ENCODE measurements at regions of chr19 and their contacts with region 1.

Region 1: DNA sequence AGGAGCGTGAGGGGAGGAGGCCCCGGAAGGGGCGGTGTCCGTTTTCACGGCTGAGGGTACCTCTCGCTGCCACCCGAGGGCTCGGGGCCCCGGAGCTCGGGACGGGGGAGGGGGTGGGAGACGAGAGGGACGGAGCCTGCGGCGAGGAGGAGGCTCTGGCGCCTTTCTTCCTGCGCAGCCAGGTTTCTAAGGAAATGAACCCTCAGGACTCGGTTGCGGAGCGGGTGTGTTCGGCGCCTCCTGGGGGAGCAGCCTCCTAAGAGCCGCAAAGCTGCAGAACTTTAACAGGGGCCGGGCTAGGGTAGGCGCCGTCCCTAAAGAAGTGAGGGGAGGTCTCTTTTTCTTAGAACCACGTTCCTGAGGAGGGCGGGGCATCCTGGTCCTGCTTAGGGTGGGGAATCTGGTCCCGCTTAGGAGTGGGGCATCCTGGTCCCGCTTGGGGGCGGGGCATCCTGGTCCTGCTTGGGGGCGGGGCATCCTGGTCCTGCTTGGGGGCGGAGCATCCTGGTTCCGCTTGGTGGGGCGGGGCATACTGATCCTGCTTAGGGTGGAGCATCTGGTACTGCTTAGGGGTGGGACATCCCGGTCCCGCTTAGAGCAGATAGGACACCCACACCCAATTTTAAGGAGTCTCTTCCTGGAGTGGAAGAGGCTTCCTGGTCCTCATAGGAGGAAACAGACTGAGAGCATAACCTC is 6.2 kb downstream of the SYT5 start:
- DNase-seq: no peak
- H3K4me3 ChIP-seq: peak overlapping the region; percentile 39
- CTCF ChIP-seq: no peak

Region 2: GRCh38 chr19:55117636-55118391 is 56.0 kb before region 1 on chr19 and contains the start of gene PPP1R12C:
- in situ Hi-C with region 1: loop called (anchors 5 kb)
- DNase-seq: peak; percentile 97
- H3K4me3 ChIP-seq: peak within 1 kb of the TSS; percentile 77
- CTCF ChIP-seq: no peak

Region 3: DNA sequence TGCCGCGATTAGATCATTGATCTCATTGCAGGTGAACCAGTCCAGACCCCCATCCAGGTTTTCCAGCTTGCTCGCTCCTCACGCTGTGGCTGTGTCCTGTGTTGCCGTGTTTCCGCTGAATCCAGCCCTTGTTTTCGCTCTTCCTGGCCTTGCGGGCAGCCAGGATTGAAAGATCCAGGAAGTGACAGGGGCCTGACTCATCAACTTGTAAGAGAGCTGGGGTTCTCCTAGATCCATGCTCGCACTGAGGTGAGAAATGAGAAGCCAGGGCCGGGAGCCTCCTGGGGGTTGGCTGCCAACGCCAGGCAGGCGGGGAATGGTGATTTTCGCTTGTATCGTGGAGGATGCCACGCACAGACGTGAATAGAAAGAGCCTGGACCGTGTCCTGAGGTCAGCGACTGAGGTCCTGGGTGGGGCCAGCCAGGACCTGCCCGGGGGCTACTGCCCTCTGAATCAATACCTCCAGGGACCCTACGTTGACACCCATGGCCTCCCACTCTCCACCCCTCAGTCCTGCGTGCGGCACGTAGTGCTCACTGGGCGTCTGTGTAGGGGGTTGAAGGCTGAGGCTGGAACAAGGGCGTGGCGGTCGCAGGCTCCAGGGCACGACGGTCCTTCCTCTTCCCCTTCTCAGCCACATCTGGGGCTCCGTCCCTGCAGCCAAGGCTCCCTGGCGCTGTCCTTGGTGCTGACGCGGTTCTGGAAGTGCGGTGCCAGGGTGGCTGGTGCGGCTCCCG is 42.8 kb after region 1 on chr19:
- in situ Hi-C with region 1: loop called (anchors 5 kb)
- DNase-seq: peak; percentile 99
- H3K4me3 ChIP-seq: peak overlapping the region; percentile 45
- CTCF ChIP-seq: no peak

Region 4: GRCh38 chr19:55297267-55297666 is 123.4 kb after region 1 on chr19:
- in situ Hi-C with region 1: loop called (anchors 5 kb)
- DNase-seq: no peak
- H3K4me3 ChIP-seq: no peak overlapping the region
- CTCF ChIP-seq: no peak